ENCODE measurements at regions of chr6 and their contacts with region 1.

Region 1: DNA sequence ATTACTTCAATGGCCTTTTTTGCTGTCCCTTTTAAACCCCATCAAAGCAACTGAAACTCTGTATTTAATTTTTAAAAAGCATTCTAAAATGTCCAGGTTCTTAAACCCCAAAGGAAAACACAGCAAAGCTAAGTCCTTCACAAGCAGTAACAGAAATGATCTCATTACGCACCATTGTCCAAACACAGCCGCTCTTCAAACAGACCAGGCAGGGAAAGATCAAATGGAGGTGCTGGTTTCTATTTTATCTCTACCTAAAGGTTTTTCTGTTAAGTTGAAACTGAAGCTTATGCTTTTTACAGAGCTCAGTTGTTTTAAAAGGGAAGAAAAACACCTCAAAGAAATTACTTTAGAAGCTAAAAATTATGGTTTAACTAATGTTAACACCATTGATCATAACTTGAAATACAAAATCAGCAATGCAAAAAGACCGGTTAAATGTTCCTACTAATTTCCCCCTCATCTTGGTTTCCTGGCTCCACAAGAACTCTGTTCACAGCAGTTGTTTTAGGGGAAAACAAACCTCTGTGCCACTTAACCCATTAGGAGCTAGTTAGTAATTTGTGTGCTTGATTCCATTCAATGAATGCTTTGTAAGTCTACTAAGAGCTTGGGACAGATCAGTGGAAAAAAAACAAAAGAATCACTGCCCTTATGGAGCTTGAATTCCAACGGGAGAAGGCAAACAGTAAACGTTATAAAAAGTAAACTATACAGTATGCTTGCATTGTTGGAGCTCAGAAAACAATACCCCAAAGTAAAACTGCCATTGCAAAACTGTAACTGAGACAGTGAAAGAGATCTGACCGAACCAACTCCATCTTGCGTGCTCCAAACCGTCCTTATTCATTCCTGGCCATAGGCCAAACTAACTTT is 87.4 kb downstream of the CD24 start:
- DNase-seq: no peak
- H3K4me3 ChIP-seq: no peak overlapping the region
- H3K27ac ChIP-seq: no peak overlapping the region
- H3K4me1 ChIP-seq: no peaks in the 10 kb centered on the region
- CTCF ChIP-seq: no peak

Region 2: DNA sequence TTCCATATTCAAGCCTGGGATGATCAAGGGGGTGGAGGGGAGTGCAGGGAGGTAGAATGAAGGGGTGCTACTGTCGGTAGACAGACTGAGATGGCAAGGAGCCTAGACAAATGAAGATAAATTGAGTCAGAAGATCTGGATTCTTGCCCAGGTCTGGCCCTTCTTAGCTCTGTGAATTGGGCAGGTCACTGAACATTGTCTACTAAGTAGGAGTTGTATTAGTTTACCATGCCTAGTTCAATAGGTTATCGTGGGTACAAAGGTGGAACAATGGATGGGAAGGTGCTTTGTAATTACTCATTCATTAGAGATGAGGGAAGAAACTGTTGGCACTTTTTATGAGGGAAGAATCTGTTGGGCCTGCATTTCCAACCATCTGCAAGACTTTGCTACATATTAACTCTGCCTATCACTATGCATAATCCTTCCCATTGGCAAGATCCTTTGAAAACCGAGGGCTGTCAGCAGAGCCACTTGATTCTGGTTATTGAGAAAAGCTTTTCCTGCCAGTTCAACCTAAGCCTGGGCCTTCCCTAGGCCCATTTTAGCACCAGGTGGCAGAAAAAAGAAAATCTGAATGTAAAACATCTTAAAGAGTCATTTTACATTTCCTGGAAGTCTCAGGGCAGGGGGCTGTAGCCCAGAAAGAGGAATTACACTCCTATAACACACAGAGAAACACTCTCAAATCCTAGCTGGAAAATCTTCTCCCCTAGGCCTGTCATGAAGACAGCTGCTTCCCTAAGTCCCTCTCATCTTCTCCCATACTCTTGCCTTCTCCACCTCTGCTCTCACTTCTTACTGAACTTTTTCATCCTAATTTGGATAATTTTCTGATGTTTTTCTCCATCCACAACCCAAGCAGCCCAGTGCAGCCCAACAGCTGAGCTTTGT is 16.1 kb before region 1 on chr6:
- CTCF ChIA-PET with region 1: no interaction called
- POLR2A ChIA-PET with region 1: interaction called, 13 read pairs
- intact Hi-C with region 1: no loop called
- DNase-seq: no peak
- H3K4me3 ChIP-seq: no peak overlapping the region
- H3K27ac ChIP-seq: no peak overlapping the region
- H3K4me1 ChIP-seq: no peaks in the 10 kb centered on the region
- CTCF ChIP-seq: no peak

Region 3: DNA sequence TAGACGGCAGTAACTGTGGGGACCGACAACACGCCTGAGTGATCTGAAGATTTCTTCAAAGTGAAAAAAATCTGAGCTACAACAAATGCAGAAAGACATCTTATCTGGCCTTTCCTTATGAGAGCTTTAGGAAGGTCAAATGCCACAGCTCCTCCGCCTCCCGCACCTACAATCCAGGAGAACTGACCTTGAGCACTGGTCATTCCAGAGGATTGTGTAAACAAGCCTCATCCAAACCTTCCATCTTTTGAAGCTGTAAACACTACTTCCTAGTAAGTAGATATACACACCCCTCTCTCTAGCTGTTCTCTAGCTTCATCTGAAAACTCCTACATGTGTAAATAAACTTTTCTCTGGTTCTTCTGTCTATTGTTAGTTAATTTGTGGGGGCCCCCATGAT is 10.4 kb after region 1 on chr6:
- CTCF ChIA-PET with region 1: no interaction called
- POLR2A ChIA-PET with region 1: interaction called, 14 read pairs
- intact Hi-C with region 1: no loop called
- DNase-seq: no peak
- H3K4me3 ChIP-seq: no peak overlapping the region
- H3K27ac ChIP-seq: no peak overlapping the region
- H3K4me1 ChIP-seq: no peaks in the 10 kb centered on the region
- CTCF ChIP-seq: no peak

Measured in OCI-LY7 (cell line).